Naive thymus-derived CD4-positive, alpha-beta T cell (primary cell): ENCODE measurements at regions of chr3 and their contacts with region 1.

Region 1: DNA sequence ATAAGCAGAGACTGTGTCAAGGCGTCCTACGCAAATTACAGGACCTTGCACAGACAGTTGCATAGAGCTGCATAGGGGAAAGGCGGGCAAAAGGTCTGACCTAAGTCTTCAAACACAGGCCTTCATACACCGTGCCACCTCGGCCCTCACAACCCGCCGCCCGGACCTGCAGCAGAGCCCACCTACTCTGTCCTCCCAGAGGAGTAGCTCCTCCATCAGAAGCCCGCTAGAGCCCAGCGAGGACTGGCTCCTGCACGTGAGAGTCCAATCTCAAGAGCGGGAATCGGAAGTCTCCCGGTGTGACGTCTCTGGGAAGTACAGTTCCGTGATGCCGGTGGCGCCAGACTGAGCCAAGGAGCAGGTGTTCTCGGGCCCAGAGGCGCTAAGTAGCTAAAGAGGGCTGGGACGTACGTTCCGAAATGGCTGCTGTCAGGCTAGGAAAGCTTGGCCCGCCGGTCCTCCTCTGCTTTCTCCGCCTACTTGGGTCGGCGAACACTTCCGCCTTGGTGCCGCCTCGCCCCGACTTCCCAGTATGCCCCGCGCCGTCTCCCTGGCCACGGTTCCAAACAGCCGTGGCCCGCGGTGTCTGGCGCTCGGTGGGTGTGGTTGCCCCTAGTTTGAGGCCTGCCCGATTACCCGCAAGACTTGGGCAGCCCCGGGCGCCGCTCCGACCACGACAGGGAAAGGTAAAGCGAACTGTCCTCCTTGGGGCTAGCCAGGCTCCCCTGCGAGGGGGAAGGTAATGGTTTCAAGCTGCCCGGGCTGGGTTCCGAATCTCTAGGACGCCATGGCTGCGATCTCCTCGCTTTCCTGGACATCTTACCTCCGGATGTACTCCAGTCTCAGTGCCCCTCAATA is at the starts of genes ASTE1 and NEK11:
- DNase-seq: peak; percentile 87 to 95 (median 92)
- ATAC-seq: peak; percentile 99
- H3K4me3 ChIP-seq: peak within 1 kb of the TSS; percentile 97
- H3K4me3 Mint-ChIP-seq: peak within 1 kb of the TSS; percentile 85 to 96 (median 89)
- H3K27ac ChIP-seq: peak within 1 kb of the TSS; percentile 95
- H3K27ac Mint-ChIP-seq: peak within 1 kb of the TSS; percentile 96 to 99 (median 97)
- H3K4me1 ChIP-seq: peaks cover 34 to 40% of the 10 kb centered on the region in 2 donors
- H3K4me1 Mint-ChIP-seq: peaks cover 29 to 59% (median 52%) of the 10 kb centered on the region in 7 donors
- H3K27me3 ChIP-seq: no peaks in the 10 kb centered on the region
- H3K27me3 Mint-ChIP-seq: peaks cover 0 to 6% (median 0%) of the 10 kb centered on the region in 5 donors
- total RNA-seq, gene ASTE1: 18.7 to 38.5 (median 27.0) TPM
- total RNA-seq, gene NEK11: 1.7 to 9.0 (median 5.3) TPM

Region 2: DNA sequence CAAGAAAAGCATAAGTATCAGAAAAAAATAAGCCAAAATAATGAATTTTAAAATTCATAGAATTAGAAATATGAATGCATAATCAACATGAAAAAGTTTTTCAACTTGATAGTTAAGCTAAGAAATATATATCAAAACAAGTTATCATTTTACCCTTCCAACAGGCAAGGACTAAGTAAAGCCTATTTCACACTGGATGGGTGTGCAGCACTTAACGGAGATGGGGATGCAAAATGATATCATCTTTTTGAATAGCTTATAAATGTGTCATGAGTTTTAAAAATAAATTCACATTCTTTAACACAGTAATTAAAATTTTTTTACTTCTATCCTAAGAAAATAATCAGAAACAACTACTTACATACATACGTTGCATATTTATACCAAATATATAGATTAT is 300.8 kb before region 1 on chr3:
- CTCF ChIA-PET with region 1: no interaction called
- POLR2A ChIA-PET with region 1: no interaction called
- intact Hi-C with region 1: no loop called
- DNase-seq: no peak
- ATAC-seq: no peak
- H3K4me3 ChIP-seq: no peak overlapping the region
- H3K4me3 Mint-ChIP-seq: no peak overlapping the region
- H3K27ac ChIP-seq: no peak overlapping the region
- H3K27ac Mint-ChIP-seq: no peak overlapping the region
- H3K4me1 ChIP-seq: no peaks in the 10 kb centered on the region
- H3K4me1 Mint-ChIP-seq: peaks cover 0 to 13% (median 7%) of the 10 kb centered on the region in 7 donors
- H3K27me3 ChIP-seq: no peaks in the 10 kb centered on the region
- H3K27me3 Mint-ChIP-seq: no peaks in the 10 kb centered on the region

Region 3: DNA sequence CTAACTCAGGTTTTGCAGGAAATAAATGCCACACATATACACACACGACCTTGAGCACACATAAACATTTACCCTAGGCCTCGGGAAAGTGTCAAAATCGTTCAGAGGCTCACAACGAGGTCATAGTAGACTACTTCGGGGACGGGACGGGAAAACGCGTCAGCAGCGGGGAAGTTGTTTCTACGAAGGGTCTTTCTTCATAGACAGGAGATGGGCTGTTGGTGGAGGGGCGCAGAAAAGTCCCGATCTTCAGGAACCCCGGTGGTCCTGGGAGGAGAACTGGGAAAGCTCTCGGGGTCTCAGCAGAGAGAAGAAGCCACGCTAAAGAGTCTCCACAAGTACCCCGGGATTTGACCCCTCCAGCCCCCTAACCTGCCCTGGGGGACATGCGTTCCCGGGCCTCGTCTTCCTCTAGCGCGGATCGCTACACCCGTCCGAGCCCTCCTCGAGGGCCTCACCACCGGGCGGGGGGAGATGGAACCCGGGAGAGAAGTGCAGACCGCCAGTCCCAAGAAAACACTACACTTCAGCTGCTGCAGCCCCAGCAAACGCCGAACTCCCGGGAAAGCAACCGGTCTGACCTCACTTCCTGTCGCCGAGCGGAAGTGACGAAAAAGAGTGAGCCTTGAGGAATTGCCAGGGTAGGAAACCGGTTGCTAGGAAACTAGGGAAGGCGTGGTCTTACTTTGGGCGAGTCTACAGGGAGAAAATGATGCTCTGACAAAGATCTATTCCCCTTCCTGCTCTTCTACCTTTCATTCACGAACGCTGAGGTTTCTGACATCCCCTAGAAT is 280.1 kb before region 1 on chr3 and contains the start of gene PIK3R4:
- CTCF ChIA-PET with region 1: no interaction called
- POLR2A ChIA-PET with region 1: no interaction called
- intact Hi-C with region 1: loop called (anchors 1 kb)
- DNase-seq: peak; percentile 79 to 98 (median 92)
- ATAC-seq: peak; percentile 87
- H3K4me3 ChIP-seq: peak within 1 kb of the TSS; percentile 87
- H3K4me3 Mint-ChIP-seq: peak within 1 kb of the TSS in 9 of 10 donors; percentile 82 to 97 (median 93)
- H3K27ac ChIP-seq: peak within 1 kb of the TSS; percentile 89
- H3K27ac Mint-ChIP-seq: peak within 1 kb of the TSS; percentile 89 to 99 (median 94)
- H3K4me1 ChIP-seq: peaks cover 5 to 20% of the 10 kb centered on the region in 2 donors
- H3K4me1 Mint-ChIP-seq: peaks cover 35 to 62% (median 50%) of the 10 kb centered on the region in 7 donors
- H3K27me3 ChIP-seq: no peaks in the 10 kb centered on the region
- H3K27me3 Mint-ChIP-seq: peaks cover 0 to 3% (median 0%) of the 10 kb centered on the region in 5 donors
- total RNA-seq, gene PIK3R4: 15.5 to 33.6 (median 27.3) TPM

Region 4: DNA sequence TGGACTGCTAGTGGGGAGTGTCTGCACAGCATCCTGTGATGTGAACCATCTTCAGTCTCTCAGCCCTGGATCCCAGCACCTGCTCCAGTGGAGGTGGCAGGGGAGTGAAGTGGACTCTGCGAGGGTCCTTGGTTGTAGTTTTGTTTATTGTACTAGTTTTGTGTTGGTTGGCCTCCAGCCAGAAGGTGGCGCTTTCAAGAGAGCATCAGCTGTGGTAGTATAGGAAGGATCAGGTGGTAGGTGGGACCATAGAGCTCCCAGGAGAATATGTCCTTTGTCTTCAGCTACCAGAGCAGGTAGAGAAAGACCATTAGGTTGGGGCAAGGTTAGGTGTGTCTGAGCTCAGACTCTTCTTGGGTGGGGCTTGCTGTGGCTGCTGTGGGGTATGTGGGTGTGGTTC is 21.0 kb after region 1 on chr3:
- CTCF ChIA-PET with region 1: no interaction called
- POLR2A ChIA-PET with region 1: interaction called, 25 read pairs
- intact Hi-C with region 1: loop called (anchors 1 kb)
- DNase-seq: no peak
- ATAC-seq: no peak
- H3K4me3 ChIP-seq: no peak overlapping the region
- H3K4me3 Mint-ChIP-seq: no peak overlapping the region
- H3K27ac ChIP-seq: no peak overlapping the region
- H3K27ac Mint-ChIP-seq: no peak overlapping the region
- H3K4me1 ChIP-seq: peaks cover 3 to 9% of the 10 kb centered on the region in 2 donors
- H3K4me1 Mint-ChIP-seq: peaks cover 0 to 20% (median 11%) of the 10 kb centered on the region in 7 donors
- H3K27me3 ChIP-seq: no peaks in the 10 kb centered on the region
- H3K27me3 Mint-ChIP-seq: peaks cover 0 to 29% (median 0%) of the 10 kb centered on the region in 5 donors

Region 5: DNA sequence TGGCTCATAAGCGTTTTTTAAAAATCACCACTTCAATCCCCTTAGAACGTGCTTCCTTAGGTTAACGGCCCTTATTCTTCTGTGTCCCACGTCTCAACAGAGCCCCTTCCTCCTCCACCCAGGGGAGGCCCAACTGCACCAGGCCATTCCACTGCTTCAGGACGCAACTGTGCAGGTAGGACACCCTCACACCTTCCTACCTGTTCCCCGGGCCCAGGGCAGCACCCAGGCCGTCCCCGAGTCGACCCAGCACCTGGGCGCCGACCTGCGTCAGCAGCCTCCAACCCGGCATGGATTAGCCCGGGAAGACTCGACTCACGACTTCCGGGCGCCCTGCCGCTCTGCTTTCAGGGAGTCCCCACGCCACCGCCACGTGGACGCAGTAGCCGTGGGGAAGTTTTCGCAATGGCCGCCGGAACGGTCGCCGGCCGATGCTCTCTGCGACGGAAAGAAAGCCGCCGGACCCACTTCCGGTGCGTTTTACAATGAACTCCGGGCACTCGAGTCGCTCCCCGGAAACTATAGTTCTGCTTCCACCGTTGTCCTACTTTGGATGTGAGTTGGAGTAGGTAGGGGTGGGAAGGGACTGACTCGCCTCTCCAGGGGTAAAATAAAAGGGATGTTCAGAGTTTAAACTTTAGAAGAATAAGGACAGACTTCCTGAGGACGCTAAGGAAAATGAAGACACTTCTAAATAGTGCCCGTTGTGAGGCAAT is 476.1 kb after region 1 on chr3 and contains the start of gene MRPL3:
- CTCF ChIA-PET with region 1: no interaction called
- POLR2A ChIA-PET with region 1: interaction called, 3 read pairs
- intact Hi-C with region 1: loop called (anchors 1 kb)
- DNase-seq: peak; percentile 68 to 82 (median 78)
- ATAC-seq: peak; percentile 90
- H3K4me3 ChIP-seq: peak within 1 kb of the TSS; percentile 79
- H3K4me3 Mint-ChIP-seq: peak within 1 kb of the TSS; percentile 94 to 100 (median 98)
- H3K27ac ChIP-seq: peak within 1 kb of the TSS; percentile 72
- H3K27ac Mint-ChIP-seq: peak within 1 kb of the TSS; percentile 86 to 98 (median 96)
- H3K4me1 ChIP-seq: peaks cover 23% of the 10 kb centered on the region in 2 donors
- H3K4me1 Mint-ChIP-seq: peaks cover 15 to 65% (median 53%) of the 10 kb centered on the region in 7 donors
- H3K27me3 ChIP-seq: no peaks in the 10 kb centered on the region
- H3K27me3 Mint-ChIP-seq: no peaks in the 10 kb centered on the region
- total RNA-seq, gene MRPL3: 33.8 to 79.2 (median 52.7) TPM

Region 6: DNA sequence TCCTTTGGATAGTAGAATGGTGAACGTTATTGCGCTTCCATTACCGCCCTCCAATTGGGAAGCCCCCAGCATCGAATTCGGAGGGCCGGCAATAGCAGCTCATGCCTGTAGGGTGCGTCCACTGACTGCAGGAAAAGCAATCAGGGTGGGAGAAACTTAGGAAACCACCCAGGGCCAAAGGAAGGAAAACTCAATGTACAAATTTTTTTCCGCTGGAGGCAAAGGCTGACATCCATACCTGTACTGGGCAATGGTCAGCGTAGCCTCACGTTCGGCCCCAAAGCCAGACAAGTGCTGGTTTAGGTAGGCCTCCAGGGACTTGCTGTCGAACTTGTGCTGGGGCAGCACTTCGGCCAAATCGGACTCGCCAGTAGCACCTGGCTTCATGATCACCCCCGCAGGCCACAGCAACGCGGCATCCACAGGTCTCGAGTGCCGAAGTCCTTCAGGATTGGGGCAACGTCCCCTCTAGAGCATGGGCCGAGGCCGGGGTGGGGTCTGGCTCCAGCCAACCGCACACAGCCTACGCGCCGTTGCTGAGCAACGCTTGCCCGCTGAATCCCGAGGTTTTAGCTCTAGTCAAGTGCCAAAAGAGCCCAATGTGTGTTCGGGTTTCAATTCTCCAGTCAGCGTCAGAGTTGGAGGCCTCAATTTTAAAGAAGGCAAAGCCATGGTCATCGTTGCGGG is 1633.0 kb after region 1 on chr3 and contains the start of gene ACAD11:
- CTCF ChIA-PET with region 1: no interaction called
- POLR2A ChIA-PET with region 1: interaction called, 3 read pairs
- intact Hi-C with region 1: loop called in 1 of 2 experiments (anchors 5 kb)
- DNase-seq: peak in 7 of 9 donors; percentile 2 to 55 (median 18)
- ATAC-seq: peak; percentile 54
- H3K4me3 ChIP-seq: peak within 1 kb of the TSS; percentile 99
- H3K4me3 Mint-ChIP-seq: peak within 1 kb of the TSS; percentile 84 to 98 (median 97)
- H3K27ac ChIP-seq: peak within 1 kb of the TSS; percentile 92
- H3K27ac Mint-ChIP-seq: peak within 1 kb of the TSS; percentile 95 to 98 (median 96)
- H3K4me1 ChIP-seq: peaks cover 9 to 19% of the 10 kb centered on the region in 2 donors
- H3K4me1 Mint-ChIP-seq: peaks cover 42 to 78% (median 67%) of the 10 kb centered on the region in 7 donors
- H3K27me3 ChIP-seq: no peaks in the 10 kb centered on the region
- H3K27me3 Mint-ChIP-seq: no peaks in the 10 kb centered on the region
- total RNA-seq, gene ACAD11: 15.0 to 33.7 (median 27.5) TPM